ENCODE measurements at regions of chr5 and their contacts with region 1.

Region 1: DNA sequence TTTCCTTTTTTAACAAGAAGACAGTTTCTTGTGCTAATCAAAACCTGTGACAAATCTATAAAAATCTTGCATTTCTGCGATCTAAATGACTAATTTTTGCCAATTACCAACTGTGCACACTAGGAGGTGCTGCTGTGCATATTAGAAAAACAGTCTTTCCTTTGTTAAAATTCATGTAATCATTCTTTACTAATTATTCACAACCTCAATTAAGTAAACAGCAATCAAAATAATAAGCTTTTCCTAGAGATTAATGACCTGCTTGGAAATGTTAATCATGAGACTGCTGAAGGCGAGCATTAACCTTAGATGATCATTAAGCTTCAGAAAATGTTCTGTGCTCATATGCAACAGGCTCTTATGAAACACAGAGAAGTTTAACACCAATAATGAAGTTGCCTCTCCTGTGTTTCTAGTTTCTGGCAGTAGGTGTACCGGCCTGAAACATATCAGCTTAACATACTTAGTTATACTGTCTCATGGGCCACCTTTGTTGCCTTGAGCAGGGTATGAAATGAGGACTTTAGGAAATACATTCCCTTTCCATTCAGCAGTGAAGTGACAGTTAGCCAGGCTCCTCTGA is 17.7 kb downstream of the RFESD start:
- DNase-seq: no peak
- CTCF ChIP-seq: peak; percentile 72

Region 2: DNA sequence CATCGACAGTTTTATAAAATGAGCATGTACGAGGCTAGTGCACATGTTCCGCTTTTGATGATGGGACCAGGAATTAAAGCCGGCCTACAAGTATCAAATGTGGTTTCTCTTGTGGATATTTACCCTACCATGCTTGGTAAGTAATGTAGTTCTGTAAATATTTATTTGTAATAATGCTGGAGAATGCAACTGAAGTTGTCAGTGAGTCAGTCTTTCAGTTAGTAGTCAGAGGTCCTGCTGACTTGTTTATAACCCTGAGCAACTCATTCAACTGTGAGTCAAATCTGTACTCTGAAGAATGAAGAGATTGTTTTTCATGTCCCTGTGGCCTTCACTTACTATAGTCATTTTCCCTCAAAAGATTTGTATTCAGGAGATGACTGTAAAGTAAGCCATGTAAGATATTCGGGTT is 72.8 kb before region 1 on chr5:
- CTCF ChIA-PET with region 1: no interaction called
- POLR2A ChIA-PET with region 1: no interaction called
- DNase-seq: peak; percentile 33
- CTCF ChIP-seq: no peak

Region 3: DNA sequence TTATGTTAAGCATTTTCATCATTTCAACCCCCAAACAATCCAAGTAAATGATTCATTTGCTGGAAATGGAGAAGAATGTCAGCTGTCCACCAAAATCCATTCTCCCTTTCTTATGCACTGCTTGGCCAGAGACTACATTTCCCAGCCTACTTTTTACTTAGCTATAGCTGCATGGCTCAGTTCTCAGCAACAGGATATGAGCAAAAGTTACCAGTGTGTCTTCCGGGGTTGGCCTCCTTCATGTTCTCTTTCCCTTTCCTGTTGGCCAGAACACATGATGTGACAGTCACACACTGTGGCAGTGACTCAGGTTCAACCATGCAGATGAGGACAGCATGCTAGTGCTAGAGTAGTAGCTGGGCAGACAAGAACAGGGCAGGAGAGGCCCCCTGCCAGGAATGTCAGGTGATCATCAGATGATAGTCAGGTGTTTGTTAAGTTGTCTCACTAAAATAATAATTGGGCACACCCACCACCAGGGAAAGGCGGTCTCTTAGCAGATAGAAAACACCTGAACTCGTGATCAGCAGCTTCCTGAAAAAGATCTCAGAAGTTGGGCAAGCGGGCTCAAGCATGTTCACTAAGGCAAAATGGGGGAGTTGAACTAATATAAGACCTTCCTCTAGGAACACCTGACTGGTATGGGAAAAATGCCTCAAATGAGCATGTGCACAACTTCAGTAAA is 32.2 kb before region 1 on chr5:
- CTCF ChIA-PET with region 1: interaction called, 13 read pairs
- POLR2A ChIA-PET with region 1: no interaction called
- DNase-seq: no peak
- CTCF ChIP-seq: no peak

Region 4: DNA sequence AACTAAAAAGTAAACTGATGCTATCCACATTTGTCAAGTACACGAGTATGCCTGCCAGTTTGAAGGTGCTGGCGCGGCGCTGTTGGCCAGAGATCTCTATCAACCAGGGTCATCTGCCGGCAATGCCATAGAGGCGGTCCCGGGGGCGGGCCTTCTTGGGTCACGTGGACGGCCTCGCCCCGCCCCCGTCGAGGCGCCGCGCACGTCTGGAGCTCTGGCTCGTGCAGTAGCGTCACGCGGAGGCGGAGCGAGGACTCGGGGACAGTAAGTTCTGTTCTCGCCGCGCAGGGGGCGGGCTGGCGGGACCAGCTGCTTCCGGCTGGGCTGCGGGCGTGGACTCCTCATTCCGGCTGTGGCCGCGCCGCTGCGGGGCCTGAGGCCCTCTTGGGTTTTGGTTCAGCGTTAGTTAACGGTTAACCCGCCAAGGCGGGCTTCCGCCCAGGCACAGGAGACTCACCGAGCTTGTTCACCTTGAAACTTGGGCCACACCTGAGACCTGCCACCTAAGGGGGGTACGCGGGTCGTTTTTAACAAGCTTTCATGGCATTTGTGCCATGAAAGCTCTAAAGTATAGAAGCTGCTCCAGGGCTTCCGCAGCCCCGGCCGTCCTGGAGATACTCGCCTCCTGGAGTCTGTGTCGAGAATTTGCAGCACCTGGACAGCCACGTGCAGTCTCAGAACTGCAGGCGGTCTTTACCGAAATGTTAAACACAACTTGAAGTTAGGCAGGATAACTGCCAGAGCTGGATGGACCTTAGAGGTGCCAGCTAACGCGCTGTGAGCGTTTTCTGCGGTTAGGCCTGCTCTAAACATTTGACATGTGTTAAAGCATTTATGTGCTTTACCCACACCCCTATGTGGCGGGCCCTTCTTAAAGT is 17.5 kb before region 1 on chr5 and contains the start of gene RFESD:
- CTCF ChIA-PET with region 1: interaction called, 24 read pairs
- POLR2A ChIA-PET with region 1: no interaction called
- DNase-seq: peak; percentile 93
- CTCF ChIP-seq: no peak

Region 5: GRCh38 chr5:95686651-95687050 is 22.4 kb after region 1 on chr5:
- CTCF ChIA-PET with region 1: interaction called, 14 read pairs
- POLR2A ChIA-PET with region 1: no interaction called
- DNase-seq: no peak
- CTCF ChIP-seq: no peak

Region 6: GRCh38 chr5:95701074-95701473 is 36.8 kb after region 1 on chr5:
- CTCF ChIA-PET with region 1: interaction called, 11 read pairs
- POLR2A ChIA-PET with region 1: no interaction called
- DNase-seq: no peak
- CTCF ChIP-seq: no peak

Region 7: GRCh38 chr5:95723632-95724364 is 59.5 kb after region 1 on chr5:
- CTCF ChIA-PET with region 1: interaction called, 16 read pairs
- POLR2A ChIA-PET with region 1: no interaction called
- DNase-seq: no peak
- CTCF ChIP-seq: no peak

Region 8: DNA sequence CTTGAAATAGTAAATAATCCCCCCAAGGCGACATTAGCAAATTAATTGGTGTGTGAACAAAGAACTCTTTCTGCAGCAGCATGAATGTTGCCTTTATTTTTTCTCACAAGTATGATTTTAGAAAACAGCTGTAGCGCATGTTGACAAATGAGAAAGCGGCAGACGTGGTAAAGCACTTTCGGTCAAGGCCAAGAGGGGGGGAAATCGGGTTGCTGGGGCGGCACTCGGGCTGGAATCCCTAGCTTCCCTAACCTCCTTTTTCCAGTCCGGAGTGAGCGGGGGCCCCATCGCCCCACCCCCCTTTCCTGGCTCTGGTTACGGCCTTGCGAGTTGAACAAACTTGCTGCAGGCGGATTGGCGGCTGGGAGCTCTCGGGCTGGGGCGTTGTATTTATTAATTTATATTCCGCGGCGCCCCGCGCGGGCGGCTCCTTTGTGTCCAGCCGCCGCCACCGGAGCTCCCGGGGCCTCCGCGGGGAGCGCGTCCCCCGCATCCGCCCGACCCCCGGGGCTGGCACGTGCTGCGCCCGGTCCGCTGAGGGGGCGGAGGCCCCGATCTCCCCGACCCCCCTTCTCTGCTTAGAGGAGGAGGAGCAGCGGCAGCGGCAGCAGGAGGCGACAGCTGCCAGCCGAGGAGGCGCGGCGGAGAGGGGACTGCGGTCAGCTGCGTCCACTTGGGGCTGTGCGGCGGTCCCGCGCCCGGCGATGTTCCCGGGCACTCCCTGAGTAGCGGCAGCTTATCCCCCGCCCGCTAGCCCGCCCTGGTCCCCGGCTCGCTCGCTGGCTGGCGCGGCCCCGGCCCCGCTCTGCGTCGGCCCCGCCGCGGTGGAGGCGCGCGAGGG is 66.7 kb after region 1 on chr5 and contains the start of gene RHOBTB3:
- CTCF ChIA-PET with region 1: interaction called, 14 read pairs
- POLR2A ChIA-PET with region 1: no interaction called
- DNase-seq: peak; percentile 61
- CTCF ChIP-seq: no peak

Measured in GM10248 (cell line).